Gastrocnemius medialis (tissue), 4 donors: ENCODE measurements at regions of chr7 and their contacts with region 1.

Region 1: DNA sequence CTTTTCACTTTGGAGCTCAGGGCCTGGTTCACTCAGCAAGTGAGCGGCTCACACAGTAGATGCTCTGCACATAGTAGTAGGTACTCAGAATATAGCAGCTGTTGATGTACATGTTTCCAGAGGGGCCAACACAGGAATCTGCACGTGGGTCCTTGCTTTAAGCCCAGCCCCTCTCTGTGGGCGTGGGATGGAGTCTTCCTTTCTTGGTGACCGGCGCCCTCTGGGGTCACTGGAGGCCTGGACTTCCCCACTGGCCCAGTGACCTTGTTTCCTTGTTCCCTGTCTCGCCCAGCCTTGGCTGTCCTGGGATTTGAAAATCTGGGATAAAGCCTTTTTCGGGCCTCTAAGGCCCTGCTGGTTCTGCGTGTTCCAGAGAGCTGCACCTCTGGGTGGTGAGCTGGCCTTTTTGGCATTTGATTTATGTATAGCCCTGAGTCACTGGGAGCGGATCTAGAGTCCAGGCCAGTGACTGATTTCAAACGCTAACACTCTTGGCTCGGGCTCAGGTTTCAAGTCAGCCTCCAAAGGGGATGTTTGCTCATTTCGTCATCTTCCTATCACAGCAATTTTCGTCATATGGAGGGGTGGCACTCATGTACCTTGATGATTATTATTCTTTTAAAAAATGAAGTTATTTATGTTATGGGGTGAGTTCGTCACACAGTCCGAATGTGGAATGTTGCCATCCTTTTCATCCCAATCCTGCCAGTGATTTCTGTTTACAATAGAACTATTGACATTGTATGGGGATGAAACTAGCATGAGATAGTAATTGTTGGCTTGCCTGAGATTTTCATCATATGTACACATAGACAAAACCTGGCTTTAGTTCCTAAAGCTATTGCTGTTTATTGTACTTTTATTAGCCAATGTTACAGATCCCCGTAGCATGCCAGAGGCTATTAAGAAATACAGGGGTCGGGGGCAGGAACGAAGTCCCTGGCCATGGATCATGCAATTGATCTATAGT is 65.5 kb downstream of the CUX1 start:
- DNase-seq: peak; percentile 93 to 95
- ATAC-seq: peak; percentile 89 to 95
- H3K4me3 ChIP-seq: peak overlapping the region in 3 of 4 donors; percentile 7 to 34 (median 16)
- H3K27ac ChIP-seq: peak overlapping the region; percentile 92 to 95 (median 94)
- H3K4me1 ChIP-seq: peaks cover 59 to 65% of the 10 kb centered on the region in 2 donors
- H3K27me3 ChIP-seq: no peaks in the 10 kb centered on the region
- CTCF ChIP-seq: peak in 1 of 5 experiments; percentile 20
- POLR2A ChIP-seq: peak; percentile 43 to 54

Region 2: DNA sequence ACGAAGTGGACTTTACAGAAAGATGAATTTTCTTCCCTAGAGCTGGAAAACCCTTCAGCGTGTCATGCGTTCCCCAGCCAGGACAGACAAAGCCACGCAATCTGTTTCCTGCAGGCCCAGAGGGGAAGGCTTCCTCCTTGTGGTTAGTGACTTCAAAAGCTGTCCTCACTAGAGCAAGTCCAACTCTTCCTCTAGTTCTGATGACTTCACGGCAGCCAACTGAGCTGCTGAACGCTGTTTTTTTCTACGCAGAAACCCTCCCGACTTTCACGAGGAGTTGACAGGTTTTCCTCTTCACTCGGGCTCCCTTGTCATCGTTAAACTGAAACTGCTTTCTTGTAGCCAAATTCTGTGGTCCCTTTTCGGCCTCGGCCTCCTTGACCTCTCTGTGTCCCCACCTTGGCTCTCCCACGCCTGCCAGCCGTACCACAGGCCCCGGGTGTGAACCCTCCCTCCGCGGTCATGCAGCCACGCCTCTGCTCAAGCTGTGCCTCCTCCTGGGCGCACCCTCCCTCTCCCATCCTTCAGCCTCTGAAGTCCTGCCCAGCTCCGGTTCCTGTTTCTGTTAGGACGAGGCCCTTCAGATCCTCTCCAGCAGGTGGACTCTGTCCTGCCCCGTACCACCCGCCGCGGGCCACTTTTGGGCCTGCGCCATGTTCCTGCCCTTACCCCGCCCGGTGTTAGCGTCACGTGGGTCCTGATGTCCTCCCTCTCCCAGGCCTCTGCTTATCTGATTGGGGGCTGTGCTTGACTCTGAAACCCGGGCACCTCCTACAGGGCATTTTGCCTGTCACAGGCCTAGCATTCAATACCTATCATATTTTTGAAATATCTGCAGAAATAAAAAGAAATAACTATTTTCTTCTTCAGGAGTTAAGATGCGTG is 26.2 kb before region 1 on chr7:
- in situ Hi-C with region 1: no loop called
- intact Hi-C with region 1: no loop called
- DNase-seq: peak; percentile 87 to 95
- ATAC-seq: peak; percentile 84 to 88
- H3K4me3 ChIP-seq: peak overlapping the region; percentile 30 to 53 (median 46)
- H3K27ac ChIP-seq: peak overlapping the region; percentile 84 to 93 (median 91)
- H3K4me1 ChIP-seq: peaks cover 57 to 64% of the 10 kb centered on the region in 2 donors
- H3K27me3 ChIP-seq: no peaks in the 10 kb centered on the region
- CTCF ChIP-seq: peak; percentile 51 to 77 (median 76)
- POLR2A ChIP-seq: peak; percentile 31 to 59

Region 3: GRCh38 chr7:102140952-102141370 is 258.1 kb after region 1 on chr7:
- in situ Hi-C with region 1: no loop called
- intact Hi-C with region 1: loop called (anchors 10 kb)
- DNase-seq: no peak
- ATAC-seq: no peak
- H3K4me3 ChIP-seq: no peak overlapping the region
- H3K27ac ChIP-seq: no peak overlapping the region
- H3K4me1 ChIP-seq: peaks cover 0 to 6% of the 10 kb centered on the region in 2 donors
- H3K27me3 ChIP-seq: no peaks in the 10 kb centered on the region
- CTCF ChIP-seq: no peak
- POLR2A ChIP-seq: no peak

Region 4: DNA sequence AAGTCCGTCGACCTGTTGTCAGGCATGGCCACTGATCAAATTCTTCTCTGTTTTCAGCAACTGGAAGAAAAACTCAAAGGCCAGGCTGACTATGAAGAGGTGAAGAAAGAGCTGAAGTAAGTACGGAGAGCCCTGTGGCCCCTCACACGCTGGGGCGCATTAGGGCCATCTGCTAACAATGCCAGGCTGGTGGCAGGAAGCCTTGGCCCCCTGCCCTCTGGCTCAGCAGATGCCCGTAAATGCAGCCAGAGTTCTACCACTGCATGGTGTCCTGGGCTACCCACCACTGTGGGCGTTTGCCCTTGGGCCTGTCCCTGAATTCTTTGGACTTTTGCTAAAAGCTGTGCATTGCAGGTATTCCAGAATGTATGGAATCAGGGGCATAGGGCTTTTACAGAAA is 306.9 kb after region 1 on chr7:
- in situ Hi-C with region 1: no loop called
- intact Hi-C with region 1: no loop called
- DNase-seq: no peak
- ATAC-seq: peak in 1 of 2 donors; percentile 29
- H3K4me3 ChIP-seq: no peak overlapping the region
- H3K27ac ChIP-seq: no peak overlapping the region
- H3K4me1 ChIP-seq: peaks cover 4 to 9% of the 10 kb centered on the region in 2 donors
- H3K27me3 ChIP-seq: no peaks in the 10 kb centered on the region
- CTCF ChIP-seq: no peak
- POLR2A ChIP-seq: no peak